Heart left ventricle (tissue), 16 donors: ENCODE measurements at regions of chr14 and their contacts with region 1.

Region 1: DNA sequence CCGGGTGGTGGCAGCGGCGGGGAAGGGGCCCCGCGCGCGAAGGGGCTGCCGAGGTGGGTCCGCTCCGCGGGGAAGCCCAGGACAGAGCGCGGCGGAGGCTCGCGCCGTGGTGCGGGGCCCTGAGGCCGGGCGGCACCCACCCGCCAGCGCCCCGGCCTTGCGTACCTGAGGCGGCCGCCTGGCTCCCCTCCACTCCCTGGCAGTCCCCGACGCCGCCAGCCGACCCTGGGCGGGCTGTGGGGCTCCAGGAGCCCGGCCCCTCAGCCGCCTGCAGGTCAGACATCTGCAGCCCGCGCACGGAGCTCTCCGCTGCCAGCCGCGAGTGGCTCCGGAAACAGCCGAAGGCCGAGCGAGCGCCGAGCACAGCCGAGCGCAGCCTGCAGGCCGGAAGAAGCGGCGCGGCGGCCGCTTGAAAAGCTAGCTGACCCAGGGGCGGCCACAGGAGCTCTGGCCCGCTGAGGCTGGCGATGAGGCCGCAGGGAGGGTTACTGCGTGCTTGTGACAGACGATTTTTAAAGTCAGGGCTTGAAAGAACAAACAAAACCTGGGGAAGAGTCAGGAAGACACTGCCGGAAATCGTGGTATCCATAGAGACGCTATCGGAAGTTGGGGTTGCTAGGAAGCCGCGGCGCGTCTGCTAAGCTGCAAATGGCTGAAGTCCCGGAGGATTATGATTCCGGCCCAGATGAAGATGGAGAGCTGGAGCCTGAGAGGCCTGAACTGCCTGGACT is at the starts of genes SAMD15 and TMED8:
- DNase-seq: peak; percentile 81 to 93 (median 87)
- ATAC-seq: peak; percentile 87 to 99 (median 99)
- H3K4me3 ChIP-seq: peak within 1 kb of the TSS; percentile 69 to 88 (median 82)
- H3K27ac ChIP-seq: peak within 1 kb of the TSS; percentile 41 to 89 (median 83)
- H3K4me1 ChIP-seq: peaks cover 0 to 31% (median 14%) of the 10 kb centered on the region in 12 donors
- H3K27me3 ChIP-seq: no peaks in the 10 kb centered on the region
- CTCF ChIP-seq: peak in 9 of 12 donors; percentile 21 to 55 (median 35)
- POLR2A ChIP-seq: peak in 1 of 2 donors; percentile 44
- total RNA-seq, gene SAMD15: 0.35 to 1.2 TPM in 2 of 9 donors, not detected in the others
- total RNA-seq, gene TMED8: 5.2 to 9.5 (median 7.8) TPM

Region 2: GRCh38 chr14:77320238-77320935 is 56.5 kb before region 1 on chr14 and contains the start of gene POMT2:
- intact Hi-C with region 1: loop called in 5 of 10 experiments (anchors 2 to 5 kb)
- DNase-seq: peak; percentile 94 to 98 (median 96)
- ATAC-seq: peak; percentile 62 to 86 (median 80)
- H3K4me3 ChIP-seq: peak within 1 kb of the TSS; percentile 79 to 99 (median 90)
- H3K27ac ChIP-seq: peak within 1 kb of the TSS; percentile 92 to 99 (median 96)
- H3K4me1 ChIP-seq: peaks cover 0 to 37% (median 17%) of the 10 kb centered on the region in 12 donors
- H3K27me3 ChIP-seq: no peaks in the 10 kb centered on the region
- CTCF ChIP-seq: peak; percentile 18 to 70 (median 54)
- POLR2A ChIP-seq: peak in 1 of 2 donors; percentile 80
- total RNA-seq, gene POMT2: 7.3 to 27.6 (median 15.3) TPM